Activated naive CD4-positive, alpha-beta T cell treated with anti-CD3 and anti-CD28 coated beads for 36 hours (primary cell): ENCODE measurements at regions of chr15 and their contacts with region 1.

Region 1: DNA sequence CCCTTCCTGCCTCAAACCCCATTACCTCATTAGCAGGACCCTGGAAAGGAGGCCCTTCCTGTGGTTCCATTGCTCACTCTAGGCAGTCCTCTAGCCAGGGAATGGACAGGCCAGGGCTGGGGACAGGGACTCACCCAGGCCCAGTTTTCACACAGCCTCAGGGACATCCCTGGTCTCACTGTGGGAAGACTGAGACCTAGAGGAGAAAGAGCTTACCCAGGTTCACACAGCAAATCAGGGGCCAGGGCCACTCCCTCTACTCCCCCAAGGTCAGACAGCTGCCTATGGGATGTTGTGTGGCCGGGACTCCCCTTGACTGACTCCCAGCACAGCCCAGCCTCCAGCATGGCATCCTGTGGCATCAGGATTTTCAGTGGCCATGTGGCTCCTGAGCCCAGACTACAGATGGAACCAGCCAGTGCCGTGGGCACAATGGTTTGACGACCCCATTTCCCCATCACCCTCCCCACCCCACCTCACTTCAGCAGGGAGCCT is 49.3 kb downstream of the ADAMTS7 start:
- DNase-seq: no peak
- H3K4me3 Mint-ChIP-seq: peak overlapping the region; percentile 54
- H3K27ac Mint-ChIP-seq: peak overlapping the region; percentile 89
- H3K4me1 Mint-ChIP-seq: peaks cover 24% of the 10 kb centered on the region
- H3K27me3 Mint-ChIP-seq: no peaks in the 10 kb centered on the region

Region 2: GRCh38 chr15:78808550-78808949 is 46.6 kb after region 1 on chr15:
- CTCF ChIA-PET with region 1: interaction called, 3 read pairs
- intact Hi-C with region 1: loop called (anchors 5 kb)
- DNase-seq: peak; percentile 45
- H3K4me3 Mint-ChIP-seq: no peak overlapping the region
- H3K27ac Mint-ChIP-seq: no peak overlapping the region
- H3K4me1 Mint-ChIP-seq: peaks cover 4% of the 10 kb centered on the region
- H3K27me3 Mint-ChIP-seq: peaks cover 30% of the 10 kb centered on the region